Activated CD4-positive, alpha-beta memory T cell treated with anti-CD3 and anti-CD28 coated beads for 36 hours (primary cell): ENCODE measurements at regions of chr2 and their contacts with region 1.

Region 1: DNA sequence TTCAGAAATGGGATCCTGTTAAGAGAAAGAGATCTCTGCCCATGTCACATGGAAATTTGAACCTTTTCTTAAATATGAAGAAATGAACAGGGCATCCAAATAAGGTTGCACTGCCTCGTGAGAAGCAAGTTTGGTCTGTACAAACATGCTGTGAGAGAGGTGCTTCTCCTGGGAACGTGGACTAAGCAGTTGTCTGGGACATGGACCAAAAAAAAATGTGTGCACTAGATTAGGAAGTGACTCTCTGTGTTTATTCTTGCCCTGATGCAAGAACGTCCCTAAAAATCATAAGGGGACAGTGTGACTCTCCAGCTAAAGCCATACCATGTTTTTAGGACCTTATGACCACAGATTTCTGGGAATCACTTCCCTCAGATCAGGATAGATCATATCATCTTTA is 23.7 kb upstream of the GCG start:
- DNase-seq: no peak
- H3K4me3 Mint-ChIP-seq: no peak overlapping the region
- H3K27ac Mint-ChIP-seq: no peak overlapping the region
- H3K4me1 Mint-ChIP-seq: peaks cover 5% of the 10 kb centered on the region
- H3K27me3 Mint-ChIP-seq: peaks cover 17% of the 10 kb centered on the region

Region 2: DNA sequence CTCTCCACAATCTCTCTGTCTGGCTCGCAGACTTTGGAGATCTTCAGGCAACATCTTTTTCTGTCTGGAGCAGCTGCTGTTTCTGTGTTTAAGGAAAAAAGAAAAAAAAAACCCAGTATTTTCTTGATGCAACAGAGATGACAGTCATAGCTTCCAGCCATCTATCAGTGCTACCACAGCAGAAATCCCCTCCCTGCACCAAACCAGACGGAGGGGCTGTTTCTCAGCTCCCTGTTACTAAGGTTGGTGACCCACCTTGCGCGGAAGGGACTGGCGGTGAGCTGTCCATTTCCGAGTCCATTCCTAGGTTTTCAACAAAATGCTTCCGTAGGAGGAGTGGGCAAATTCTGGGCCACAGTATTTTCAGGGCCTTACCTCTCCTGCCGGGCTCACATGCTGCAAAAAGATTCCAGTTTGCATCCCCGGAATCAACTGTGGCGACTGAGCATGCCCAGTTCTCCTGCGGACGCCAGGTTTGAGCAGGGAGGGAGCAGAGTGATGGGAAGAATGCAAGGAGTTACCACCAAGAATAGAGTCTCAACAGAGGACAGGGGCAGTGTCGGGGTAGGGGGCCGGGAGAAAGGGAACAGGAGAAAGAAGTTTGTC is 550.3 kb before region 1 on chr2:
- CTCF ChIA-PET with region 1: no interaction called
- POLR2A ChIA-PET with region 1: no interaction called
- intact Hi-C with region 1: no loop called
- DNase-seq: peak; percentile 9
- H3K4me3 Mint-ChIP-seq: peak overlapping the region; percentile 12
- H3K27ac Mint-ChIP-seq: no peak overlapping the region
- H3K4me1 Mint-ChIP-seq: peaks cover 12% of the 10 kb centered on the region
- H3K27me3 Mint-ChIP-seq: peaks cover 17% of the 10 kb centered on the region

Region 3: DNA sequence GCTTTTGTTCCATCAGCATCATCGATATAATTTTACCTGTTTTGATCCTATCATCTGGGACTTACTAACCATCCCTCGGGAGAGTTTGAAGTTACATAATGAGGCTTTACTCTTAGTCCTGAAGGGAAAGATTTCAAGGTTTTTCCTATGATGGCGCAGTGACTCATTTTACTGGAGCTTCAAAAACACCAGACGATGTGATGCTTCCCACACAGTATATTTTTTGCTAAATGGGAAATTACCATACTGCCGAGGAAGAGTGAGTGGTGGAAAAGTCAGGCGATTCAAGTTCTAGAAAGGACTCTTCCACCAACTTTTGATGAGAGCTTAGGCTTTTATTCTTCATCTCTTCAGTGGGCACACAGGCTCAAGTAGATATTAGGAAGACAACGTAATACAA is 20.9 kb after region 1 on chr2:
- CTCF ChIA-PET with region 1: no interaction called
- POLR2A ChIA-PET with region 1: no interaction called
- intact Hi-C with region 1: loop called (anchors 2 kb)
- DNase-seq: no peak
- H3K4me3 Mint-ChIP-seq: no peak overlapping the region
- H3K27ac Mint-ChIP-seq: no peak overlapping the region
- H3K4me1 Mint-ChIP-seq: peaks cover 10% of the 10 kb centered on the region
- H3K27me3 Mint-ChIP-seq: peaks cover 29% of the 10 kb centered on the region